HCT116 (cell line): ENCODE measurements at regions of chr14 and their contacts with region 1.

Region 1: GRCh38 chr14:64986578-64987571 is at the start of gene FNTB:
- DNase-seq: peak; percentile 92
- ATAC-seq: peak; percentile 97
- H3K4me3 ChIP-seq: peak within 1 kb of the TSS; percentile 75 to 91
- H3K27ac ChIP-seq: peak within 1 kb of the TSS; percentile 87
- H3K4me1 ChIP-seq: peaks cover 8 to 18% of the 10 kb centered on the region in 2 experiments
- H3K27me3 ChIP-seq: no peaks in the 10 kb centered on the region
- CTCF ChIP-seq: peak; percentile 75 to 77 (median 76); a peak in 5 of 6 replicates
- POLR2A ChIP-seq: peak; percentile 92
- RAD21 ChIP-seq: peak; percentile 90
- total RNA-seq, gene FNTB: 26.7 TPM

Region 2: DNA sequence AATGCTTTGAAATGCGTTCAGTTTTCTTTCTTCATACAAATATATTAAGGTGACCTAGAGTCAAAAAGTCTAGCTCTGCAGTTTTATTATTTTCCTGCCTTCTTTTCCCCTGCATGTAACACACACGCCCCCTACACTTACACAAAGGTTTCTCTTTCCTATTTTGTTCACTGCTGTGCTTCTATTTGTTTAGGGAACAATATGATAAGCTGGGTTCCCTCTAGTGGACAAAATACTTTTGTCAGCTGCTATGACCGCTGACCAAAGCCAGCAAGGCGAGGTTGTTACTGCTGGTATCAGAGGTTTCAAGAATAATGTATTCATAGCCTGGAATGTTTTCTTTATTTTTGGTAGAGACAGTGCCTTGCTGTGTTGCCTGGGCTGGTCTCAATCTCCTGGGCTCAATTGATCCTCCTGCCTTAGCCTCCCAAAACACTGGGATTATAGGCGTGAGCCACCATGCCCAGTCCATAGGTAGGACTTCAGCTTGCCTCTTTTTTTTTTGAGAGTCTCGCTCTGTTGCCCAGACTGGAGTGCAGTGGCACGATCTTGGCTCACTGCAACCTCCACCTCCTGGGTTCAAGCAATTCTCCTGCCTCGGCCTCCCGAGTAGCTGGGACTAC is 33.2 kb after region 1 on chr14:
- CTCF ChIA-PET with region 1: interaction called, 24 read pairs
- POLR2A ChIA-PET with region 1: no interaction called
- RAD21 ChIA-PET with region 1: interaction called in 1 of 2 experiments, 4 read pairs
- intact Hi-C with region 1: no loop called
- DNase-seq: peak; percentile 53
- ATAC-seq: peak; percentile 97
- H3K4me3 ChIP-seq: no peak overlapping the region
- H3K27ac ChIP-seq: no peak overlapping the region
- H3K4me1 ChIP-seq: peaks cover 0 to 4% of the 10 kb centered on the region in 2 experiments; a peak in 1 of 4 replicates
- H3K27me3 ChIP-seq: no peaks in the 10 kb centered on the region
- CTCF ChIP-seq: peak; percentile 60 to 77 (median 76)
- POLR2A ChIP-seq: no peak
- RAD21 ChIP-seq: peak; percentile 60